ENCODE measurements at regions of chr14 and their contacts with region 1.

Region 1: DNA sequence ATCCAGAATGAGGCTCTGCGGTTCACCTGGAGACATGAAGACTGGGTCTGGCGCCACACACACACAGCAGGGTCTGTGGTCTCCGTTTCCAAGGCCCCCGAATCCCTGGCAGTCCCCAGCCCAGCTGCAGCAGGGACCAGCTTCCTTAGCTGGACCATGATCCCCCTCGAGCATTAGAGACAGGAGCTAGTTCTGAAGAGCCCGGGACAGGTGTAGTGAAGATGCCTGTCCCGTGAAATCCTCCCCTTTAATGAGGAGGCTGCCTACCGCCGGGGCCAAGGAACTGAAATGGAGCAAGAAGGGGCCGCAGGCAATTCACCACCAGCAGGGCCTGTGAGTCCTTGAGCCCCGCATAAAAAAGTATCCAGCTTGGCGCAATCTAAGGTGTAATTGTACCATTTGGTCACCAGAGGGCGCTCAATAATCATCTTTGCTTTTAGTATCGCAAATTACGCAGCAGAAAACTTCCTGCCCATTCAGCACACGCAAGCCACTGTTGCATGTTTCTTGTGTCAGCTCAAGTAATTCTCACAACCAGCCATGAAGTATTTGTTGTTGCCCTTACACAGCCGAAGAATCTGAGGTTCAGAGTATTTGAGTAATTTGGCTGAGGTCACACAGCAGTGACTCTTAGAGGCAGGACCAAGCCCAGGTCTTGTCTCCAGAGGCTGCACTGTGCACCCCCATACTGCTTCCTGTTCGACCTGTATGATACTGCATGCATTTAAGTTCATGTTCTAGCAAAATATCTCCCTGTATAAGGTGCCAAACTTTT is 54.3 kb upstream of the PPP2R5C start:
- DNase-seq: peak; percentile 58
- H3K4me3 ChIP-seq: no peak overlapping the region
- H3K27ac ChIP-seq: no peak overlapping the region
- H3K4me1 ChIP-seq: peaks cover 10% of the 10 kb centered on the region
- H3K27me3 ChIP-seq: no peaks in the 10 kb centered on the region
- CTCF ChIP-seq: peak; percentile 66 to 71

Region 2: DNA sequence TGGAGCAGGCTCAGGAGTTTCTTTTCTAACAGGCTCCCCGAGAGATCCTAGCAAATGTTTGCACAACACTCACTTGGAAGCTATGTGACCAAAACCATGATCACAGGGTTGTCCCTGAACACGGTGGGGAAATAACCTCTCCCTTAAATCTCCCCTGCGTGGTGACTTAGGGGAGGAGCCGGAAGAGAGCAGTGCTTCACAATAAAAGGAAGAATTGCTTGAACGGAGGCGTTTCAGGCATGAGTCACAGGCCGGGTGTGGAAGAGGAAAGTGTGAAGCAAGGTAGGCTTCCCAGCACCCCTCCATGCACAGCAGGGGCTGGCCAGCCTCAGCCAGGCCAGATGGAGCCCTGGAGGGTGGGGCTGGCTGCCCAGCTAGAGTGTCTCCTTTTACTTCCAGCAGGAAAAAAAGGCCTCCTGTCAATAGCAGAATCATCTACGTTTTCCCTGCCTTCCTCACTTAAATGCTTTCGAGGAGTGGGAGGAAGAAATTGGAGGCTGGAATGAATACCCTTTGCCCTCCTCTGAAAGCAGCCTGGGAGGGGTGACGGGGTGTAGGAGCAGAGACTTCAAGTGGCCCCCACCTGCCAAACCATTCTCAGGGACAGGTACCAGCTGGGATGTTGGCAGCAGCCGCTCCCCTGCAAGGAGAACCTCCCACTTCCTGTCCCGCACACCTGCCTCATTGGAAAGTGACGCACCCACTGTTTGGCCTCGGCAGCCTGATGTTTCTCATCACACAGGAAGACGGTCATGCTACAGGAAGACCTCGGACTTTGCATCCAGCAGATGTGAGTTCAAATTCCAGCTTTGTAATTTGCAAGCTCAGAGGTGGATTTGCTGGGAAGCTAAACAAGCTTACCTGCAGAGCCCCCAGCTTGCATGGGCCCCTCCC is 24.2 kb after region 1 on chr14:
- CTCF ChIA-PET with region 1: interaction called, 3 read pairs
- dilution Hi-C with region 1: no loop called
- in situ Hi-C with region 1: no loop called
- intact Hi-C with region 1: loop called (anchors 2 kb)
- DNase-seq: peak; percentile 95
- H3K4me3 ChIP-seq: peak overlapping the region in 1 of 3 experiments; percentile 18
- H3K27ac ChIP-seq: peak overlapping the region; percentile 91
- H3K4me1 ChIP-seq: peaks cover 37% of the 10 kb centered on the region
- H3K27me3 ChIP-seq: no peaks in the 10 kb centered on the region
- CTCF ChIP-seq: peak in 1 of 2 donors; percentile 6

Region 3: GRCh38 chr14:101761032-101761880 is 54.0 kb after region 1 on chr14 and contains the start of gene PPP2R5C:
- CTCF ChIA-PET with region 1: interaction called, 3 read pairs
- dilution Hi-C with region 1: no loop called
- in situ Hi-C with region 1: no loop called
- intact Hi-C with region 1: loop called (anchors 2 kb)
- DNase-seq: peak; percentile 79
- H3K4me3 ChIP-seq: peak within 1 kb of the TSS; percentile 68 to 96 (median 95)
- H3K27ac ChIP-seq: peak within 1 kb of the TSS; percentile 34
- H3K4me1 ChIP-seq: peaks cover 14% of the 10 kb centered on the region
- H3K27me3 ChIP-seq: no peaks in the 10 kb centered on the region
- CTCF ChIP-seq: no peak
- total RNA-seq, gene PPP2R5C: 85.0 to 110 TPM

Region 4: DNA sequence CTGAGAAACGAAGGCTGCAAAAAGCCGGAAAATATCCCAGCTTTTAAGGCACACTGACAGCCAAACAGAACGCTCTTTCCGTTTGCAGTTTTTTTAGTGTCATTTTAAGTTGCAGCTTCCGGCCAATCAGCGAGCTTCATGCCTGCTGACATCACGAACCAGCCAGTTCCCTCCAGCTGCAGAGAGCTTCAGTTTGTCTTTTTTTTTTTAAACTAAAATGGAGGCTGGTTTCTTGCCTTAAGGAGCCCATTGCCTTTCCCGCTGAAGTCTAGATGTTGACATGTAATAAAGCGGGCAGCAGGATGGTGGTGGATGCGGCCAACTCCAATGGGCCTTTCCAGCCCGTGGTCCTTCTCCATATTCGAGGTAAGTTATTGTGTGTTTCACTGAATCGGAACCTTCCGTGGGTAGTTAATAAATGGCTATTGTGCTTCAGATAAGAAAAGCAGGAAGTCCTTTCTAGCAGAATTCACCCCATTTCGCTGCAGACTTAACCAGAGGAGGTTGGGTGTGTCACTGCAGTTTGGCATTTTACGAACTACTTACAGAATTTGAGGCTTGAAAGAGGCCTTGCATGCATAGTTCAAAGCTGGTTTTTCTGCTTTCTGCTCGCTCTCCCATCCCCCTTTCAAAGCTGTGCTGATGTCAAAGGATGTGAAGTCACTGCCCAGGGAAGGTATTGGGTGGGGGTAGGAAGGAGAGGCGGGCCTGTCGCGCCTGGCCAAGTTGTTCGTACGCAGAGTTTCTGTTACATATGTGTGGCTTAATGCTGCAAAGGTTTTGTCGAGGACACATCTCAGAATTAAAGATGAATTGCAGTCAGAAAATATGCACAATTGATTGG is 102.6 kb after region 1 on chr14:
- CTCF ChIA-PET with region 1: no interaction called
- dilution Hi-C with region 1: loop called (anchors 5 kb)
- in situ Hi-C with region 1: no loop called
- intact Hi-C with region 1: no loop called
- DNase-seq: peak; percentile 92
- H3K4me3 ChIP-seq: peak overlapping the region; percentile 68 to 78 (median 74)
- H3K27ac ChIP-seq: peak overlapping the region; percentile 98
- H3K4me1 ChIP-seq: peaks cover 4% of the 10 kb centered on the region
- H3K27me3 ChIP-seq: no peaks in the 10 kb centered on the region
- CTCF ChIP-seq: no peak

Region 5: DNA sequence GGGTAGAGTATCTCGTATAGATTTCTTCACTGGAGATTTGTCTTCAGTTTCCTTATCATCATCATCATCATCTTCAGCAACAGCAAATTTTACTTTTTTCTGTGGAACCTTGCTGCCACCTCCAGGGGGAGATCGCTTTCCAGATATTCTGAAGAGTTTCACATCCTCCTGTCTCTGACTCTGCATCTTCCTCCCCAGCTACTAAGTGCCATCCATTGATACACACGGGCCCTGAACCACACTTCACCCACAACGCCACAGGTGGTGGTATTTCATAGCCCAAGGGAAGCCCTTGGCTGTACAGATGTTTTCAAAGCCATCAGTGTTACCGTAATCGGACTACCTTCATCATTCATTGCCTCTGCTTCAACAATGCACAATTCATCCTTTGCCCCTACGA is 136.4 kb after region 1 on chr14:
- CTCF ChIA-PET with region 1: no interaction called
- dilution Hi-C with region 1: no loop called
- in situ Hi-C with region 1: no loop called
- intact Hi-C with region 1: loop called (anchors 5 kb)
- DNase-seq: no peak
- H3K4me3 ChIP-seq: no peak overlapping the region
- H3K27ac ChIP-seq: no peak overlapping the region
- H3K4me1 ChIP-seq: peaks cover 8% of the 10 kb centered on the region
- H3K27me3 ChIP-seq: no peaks in the 10 kb centered on the region
- CTCF ChIP-seq: peak; percentile 18

Region 6: GRCh38 chr14:101947906-101948665 is 240.8 kb after region 1 on chr14:
- CTCF ChIA-PET with region 1: no interaction called
- dilution Hi-C with region 1: no loop called
- in situ Hi-C with region 1: no loop called
- intact Hi-C with region 1: loop called (anchors 2 kb)
- DNase-seq: peak; percentile 100
- H3K4me3 ChIP-seq: peak overlapping the region; percentile 72 to 92 (median 83)
- H3K27ac ChIP-seq: peak overlapping the region; percentile 95
- H3K4me1 ChIP-seq: peaks cover 15% of the 10 kb centered on the region
- H3K27me3 ChIP-seq: no peaks in the 10 kb centered on the region
- CTCF ChIP-seq: no peak

Region 7: DNA sequence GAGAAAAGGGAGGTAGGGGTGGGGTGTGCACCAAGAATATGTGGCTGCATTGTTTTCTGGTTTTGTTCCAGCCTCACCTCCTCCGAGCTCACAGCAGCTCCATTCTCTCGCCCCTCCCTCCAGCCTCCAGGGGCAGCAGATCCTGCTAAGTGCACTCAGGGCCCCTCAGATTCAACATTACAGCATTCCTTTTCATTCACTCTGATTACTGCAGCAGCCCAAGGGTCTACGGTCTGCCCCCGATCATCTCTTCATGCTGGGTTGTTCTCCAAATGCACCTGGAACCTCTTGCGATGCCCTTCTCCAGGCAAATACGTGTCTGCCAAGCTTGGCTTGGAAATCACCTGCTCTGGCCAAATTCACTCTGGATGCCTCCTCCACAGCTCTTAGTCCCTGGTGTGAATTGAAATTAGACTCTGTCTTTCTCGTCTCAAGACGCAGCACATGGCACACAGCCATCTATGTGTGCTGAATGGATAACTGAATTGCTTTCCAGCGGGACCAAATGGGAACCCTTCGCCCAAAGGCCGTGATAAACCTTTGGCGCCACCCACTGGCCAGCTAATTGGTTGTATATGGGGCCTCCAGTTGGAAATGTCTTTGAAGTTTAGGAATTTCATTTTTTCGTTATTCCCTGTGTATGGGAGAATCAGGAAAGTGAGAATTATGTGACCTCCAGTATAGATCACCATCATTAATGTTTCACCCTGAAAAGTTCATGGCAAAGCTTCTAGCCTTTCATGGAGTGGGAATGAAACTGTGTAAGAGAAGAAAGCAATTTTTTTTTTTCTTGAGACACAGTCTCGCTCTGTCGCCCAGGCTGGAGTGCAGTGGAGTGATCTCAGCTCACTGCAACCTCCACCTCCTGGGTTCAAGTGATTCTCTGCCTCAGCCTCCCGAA is 389.2 kb after region 1 on chr14:
- CTCF ChIA-PET with region 1: no interaction called
- dilution Hi-C with region 1: no loop called
- in situ Hi-C with region 1: no loop called
- intact Hi-C with region 1: loop called (anchors 1 kb)
- DNase-seq: peak; percentile 55
- H3K4me3 ChIP-seq: no peak overlapping the region
- H3K27ac ChIP-seq: no peak overlapping the region
- H3K4me1 ChIP-seq: peaks cover 19% of the 10 kb centered on the region
- H3K27me3 ChIP-seq: no peaks in the 10 kb centered on the region
- CTCF ChIP-seq: peak; percentile 77 to 85

Region 8: GRCh38 chr14:102717276-102717675 is 1010.0 kb after region 1 on chr14:
- CTCF ChIA-PET with region 1: no interaction called
- dilution Hi-C with region 1: no loop called
- in situ Hi-C with region 1: no loop called
- intact Hi-C with region 1: no loop called
- DNase-seq: no peak
- H3K4me3 ChIP-seq: no peak overlapping the region
- H3K27ac ChIP-seq: no peak overlapping the region
- H3K4me1 ChIP-seq: peaks cover 3% of the 10 kb centered on the region
- H3K27me3 ChIP-seq: no peaks in the 10 kb centered on the region
- CTCF ChIP-seq: no peak

Measured in mammary epithelial cell (primary cell).